MCF 10A (cell line): ENCODE measurements at regions of chr1 and their contacts with region 1.

Region 1: GRCh38 chr1:101288491-101288944 is 51.7 kb downstream of the S1PR1 start:
- DNase-seq: peak; percentile 87
- H3K4me3 Mint-ChIP-seq: no peak overlapping the region
- H3K27ac Mint-ChIP-seq: no peak overlapping the region
- H3K4me1 Mint-ChIP-seq: peaks cover 13% of the 10 kb centered on the region
- H3K27me3 Mint-ChIP-seq: no peaks in the 10 kb centered on the region
- CTCF ChIP-seq: peak; percentile 85

Region 2: DNA sequence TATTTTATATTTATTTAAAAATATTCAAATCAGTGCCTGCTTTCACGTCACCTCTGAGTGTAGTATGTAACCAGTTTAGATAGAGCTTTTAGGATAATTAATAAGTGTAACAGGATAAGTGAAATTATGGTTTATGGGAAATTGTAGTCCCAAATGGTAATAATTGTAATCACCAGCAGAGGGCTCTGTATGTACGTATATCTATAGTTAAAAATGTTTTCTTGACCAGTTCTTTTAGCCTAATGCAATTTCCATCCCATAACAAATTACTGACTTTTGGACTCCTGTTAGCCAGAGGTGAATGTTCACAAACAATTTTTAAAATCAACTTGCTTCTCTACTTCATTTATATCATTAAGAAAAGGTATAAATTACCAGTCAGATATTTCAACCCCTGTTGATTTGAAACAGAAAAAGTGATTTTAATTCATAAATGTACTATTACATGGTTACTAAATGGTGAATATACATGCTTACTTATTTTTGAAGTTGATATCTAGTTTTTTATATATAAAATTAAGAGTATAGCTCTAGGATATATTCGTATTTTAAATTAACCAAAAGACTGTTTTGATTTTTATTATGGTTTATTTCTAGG is 367.3 kb before region 1 on chr1:
- CTCF ChIA-PET with region 1: interaction called, 167 read pairs
- POLR2A ChIA-PET with region 1: interaction called, 11 read pairs
- intact Hi-C with region 1: loop called (anchors 1 kb)
- DNase-seq: peak; percentile 66
- H3K4me3 Mint-ChIP-seq: no peak overlapping the region
- H3K27ac Mint-ChIP-seq: no peak overlapping the region
- H3K4me1 Mint-ChIP-seq: no peaks in the 10 kb centered on the region
- H3K27me3 Mint-ChIP-seq: no peaks in the 10 kb centered on the region
- CTCF ChIP-seq: peak; percentile 53

Region 3: DNA sequence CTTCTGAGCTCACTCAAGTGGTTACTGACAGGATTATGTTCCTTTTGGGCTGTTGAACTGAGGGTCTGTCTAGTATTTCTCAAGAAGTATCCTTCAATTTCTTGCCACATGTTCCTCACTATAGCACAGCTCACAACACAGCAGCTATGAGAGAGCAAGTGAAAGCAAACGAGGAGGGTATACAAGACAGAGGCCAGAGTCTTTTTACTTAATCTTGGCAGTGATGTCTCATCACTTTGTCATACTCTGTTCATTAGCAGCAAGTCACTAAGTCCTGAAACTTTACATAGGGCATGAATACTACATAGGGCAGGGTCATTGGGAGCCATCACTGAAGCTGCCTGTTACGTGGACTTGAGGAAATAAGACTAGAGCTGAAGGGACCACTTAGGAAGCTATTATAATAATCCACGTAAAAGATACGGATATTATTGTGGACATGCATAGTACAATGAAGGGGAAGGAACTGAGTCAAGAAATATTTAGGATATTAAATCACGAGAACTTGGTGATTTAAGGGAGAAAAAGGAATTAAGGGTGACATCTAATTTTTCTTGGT is 328.9 kb before region 1 on chr1:
- CTCF ChIA-PET with region 1: interaction called, 10 read pairs
- POLR2A ChIA-PET with region 1: interaction called, 3 read pairs
- intact Hi-C with region 1: no loop called
- DNase-seq: no peak
- H3K4me3 Mint-ChIP-seq: no peak overlapping the region
- H3K27ac Mint-ChIP-seq: no peak overlapping the region
- H3K4me1 Mint-ChIP-seq: peaks cover 5% of the 10 kb centered on the region
- H3K27me3 Mint-ChIP-seq: no peaks in the 10 kb centered on the region
- CTCF ChIP-seq: no peak

Region 4: DNA sequence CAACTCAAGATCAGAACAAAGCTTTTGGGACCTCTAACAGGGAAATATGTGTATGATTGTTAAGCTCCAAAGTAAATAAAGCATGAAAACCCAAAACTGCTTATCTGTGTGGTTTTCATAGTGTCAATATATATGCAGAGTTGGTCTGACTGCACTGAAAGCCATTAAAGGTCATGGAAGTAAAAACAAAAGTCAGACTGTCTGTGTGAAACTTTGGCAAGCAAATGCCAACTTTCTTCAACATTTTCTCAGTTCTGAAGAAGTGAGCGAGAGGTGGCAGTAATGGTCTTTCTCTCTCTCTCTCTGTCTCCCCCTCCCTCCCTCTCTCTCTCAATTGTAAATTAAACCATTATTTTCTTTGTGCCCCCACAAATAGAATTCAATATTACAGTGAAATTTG is 151.8 kb before region 1 on chr1:
- CTCF ChIA-PET with region 1: interaction called, 44 read pairs
- POLR2A ChIA-PET with region 1: no interaction called
- intact Hi-C with region 1: loop called (anchors 5 kb)
- DNase-seq: no peak
- H3K4me3 Mint-ChIP-seq: no peak overlapping the region
- H3K27ac Mint-ChIP-seq: no peak overlapping the region
- H3K4me1 Mint-ChIP-seq: peaks cover 6% of the 10 kb centered on the region
- H3K27me3 Mint-ChIP-seq: no peaks in the 10 kb centered on the region
- CTCF ChIP-seq: no peak

Region 5: DNA sequence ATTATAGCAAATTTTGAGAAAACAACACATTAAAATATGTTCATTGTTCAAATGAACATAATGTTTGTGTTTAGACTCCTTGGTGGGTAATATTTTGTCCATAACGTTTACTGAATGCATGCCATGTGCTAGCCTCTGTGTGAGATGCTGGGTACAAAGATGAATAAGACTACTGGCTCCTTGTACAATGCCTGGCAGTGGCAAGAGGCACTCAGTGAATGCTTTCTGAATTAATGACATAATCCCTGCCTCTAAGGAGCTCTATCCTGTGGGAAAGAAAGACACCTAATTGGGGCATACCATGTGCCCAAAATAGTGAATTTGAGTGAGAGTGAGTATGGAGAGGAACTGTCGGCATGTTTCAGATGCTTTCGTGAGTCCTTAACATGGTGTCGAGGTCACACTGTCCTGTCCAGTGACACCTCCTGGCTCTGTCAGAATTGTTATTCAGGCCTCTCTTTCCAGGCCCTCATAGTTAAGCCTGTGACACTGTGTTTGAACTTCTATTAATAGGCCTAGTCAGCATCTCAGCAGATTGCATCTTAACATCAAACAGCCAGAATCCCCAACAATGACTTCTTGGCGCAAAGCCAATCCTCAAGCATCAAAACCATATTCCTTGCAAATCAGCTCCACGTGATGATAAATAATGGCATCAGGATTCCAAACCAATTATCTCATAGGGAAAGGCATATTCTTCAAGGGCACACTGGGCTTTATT is 84.5 kb before region 1 on chr1:
- CTCF ChIA-PET with region 1: no interaction called
- POLR2A ChIA-PET with region 1: no interaction called
- intact Hi-C with region 1: no loop called
- DNase-seq: no peak
- H3K4me3 Mint-ChIP-seq: no peak overlapping the region
- H3K27ac Mint-ChIP-seq: no peak overlapping the region
- H3K4me1 Mint-ChIP-seq: peaks cover 6% of the 10 kb centered on the region
- H3K27me3 Mint-ChIP-seq: no peaks in the 10 kb centered on the region
- CTCF ChIP-seq: no peak

Region 6: GRCh38 chr1:101253976-101254674 is 34.4 kb before region 1 on chr1:
- CTCF ChIA-PET with region 1: interaction called, 31 read pairs
- POLR2A ChIA-PET with region 1: interaction called, 4 read pairs
- intact Hi-C with region 1: no loop called
- DNase-seq: peak; percentile 13
- H3K4me3 Mint-ChIP-seq: no peak overlapping the region
- H3K27ac Mint-ChIP-seq: no peak overlapping the region
- H3K4me1 Mint-ChIP-seq: peaks cover 17% of the 10 kb centered on the region
- H3K27me3 Mint-ChIP-seq: no peaks in the 10 kb centered on the region
- CTCF ChIP-seq: no peak

Region 7: DNA sequence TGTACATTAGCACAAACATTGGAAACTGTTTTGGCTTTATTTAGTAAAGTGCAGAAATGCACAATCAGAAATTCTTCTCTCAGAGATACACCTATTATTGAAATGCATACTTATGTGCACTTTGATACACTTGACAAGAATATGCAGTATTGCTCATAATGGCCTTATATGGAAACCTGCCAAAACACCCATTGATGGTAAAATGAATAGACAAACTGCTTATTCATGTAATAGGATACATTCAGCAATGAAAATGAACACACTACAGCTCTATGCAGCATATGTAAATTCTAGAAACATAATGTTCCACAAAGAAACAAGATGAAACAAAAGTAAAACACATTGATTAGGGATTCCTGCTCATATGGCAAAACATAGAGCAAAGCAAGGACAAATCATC is 172.2 kb after region 1 on chr1:
- CTCF ChIA-PET with region 1: no interaction called
- POLR2A ChIA-PET with region 1: no interaction called
- intact Hi-C with region 1: no loop called
- DNase-seq: peak; percentile 10
- H3K4me3 Mint-ChIP-seq: no peak overlapping the region
- H3K27ac Mint-ChIP-seq: no peak overlapping the region
- H3K4me1 Mint-ChIP-seq: no peaks in the 10 kb centered on the region
- H3K27me3 Mint-ChIP-seq: no peaks in the 10 kb centered on the region
- CTCF ChIP-seq: no peak